ENCODE measurements at regions of chr14 and their contacts with region 1.

Region 1: DNA sequence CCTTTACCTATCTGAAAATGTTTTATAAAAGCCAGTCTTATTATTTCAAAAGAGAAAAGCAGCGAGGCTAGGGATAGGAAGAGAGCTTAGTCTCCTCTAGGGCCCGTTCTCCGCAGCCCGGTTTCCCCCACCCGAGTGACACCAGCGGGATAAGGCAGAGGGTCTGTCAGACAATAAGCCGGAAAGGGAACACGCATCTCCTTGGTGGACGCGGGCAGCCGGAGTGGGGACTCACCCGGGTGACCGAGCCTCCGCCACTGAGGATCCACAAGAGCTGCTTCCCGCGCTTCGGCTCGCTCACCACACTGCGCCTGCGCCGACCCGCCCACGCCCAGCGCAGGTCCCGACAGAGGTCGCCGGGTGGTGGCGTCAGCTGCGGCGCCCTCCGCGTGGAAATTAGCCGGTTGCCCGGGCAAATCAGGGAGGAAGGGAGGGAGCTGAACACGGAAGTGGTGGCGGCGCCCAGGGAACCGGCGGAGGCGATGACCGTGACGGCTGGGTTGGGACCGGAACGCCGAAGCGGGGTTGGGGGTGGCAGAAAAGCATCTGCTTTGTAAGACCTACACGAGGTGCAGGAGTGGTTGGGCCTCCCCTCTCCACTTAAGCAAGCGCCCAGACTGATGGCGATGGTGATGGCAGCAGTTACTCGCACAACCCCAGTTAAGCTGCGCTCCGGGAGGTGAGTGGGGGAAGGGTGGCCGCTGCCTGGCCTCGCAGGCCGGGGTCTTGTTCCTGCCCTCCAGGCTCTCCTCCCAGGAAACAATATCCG is at the starts of genes SOCS4 and WDHD1:
- DNase-seq: peak; percentile 97
- ATAC-seq: peak; percentile 93
- H3K4me3 ChIP-seq: peak within 1 kb of the TSS; percentile 62 to 95 (median 90)
- H3K4me3 Mint-ChIP-seq: peak within 1 kb of the TSS; percentile 94
- H3K27ac ChIP-seq: peak within 1 kb of the TSS; percentile 78 to 90
- H3K27ac Mint-ChIP-seq: peak within 1 kb of the TSS; percentile 91
- H3K4me1 ChIP-seq: peaks cover 18 to 30% of the 10 kb centered on the region in 2 donors
- H3K4me1 Mint-ChIP-seq: peaks cover 47% of the 10 kb centered on the region
- H3K27me3 ChIP-seq: no peaks in the 10 kb centered on the region
- H3K27me3 Mint-ChIP-seq: no peaks in the 10 kb centered on the region
- CTCF ChIP-seq: no peak
- total RNA-seq, gene SOCS4: 23.6 and 26.3 TPM in 2 replicates
- total RNA-seq, gene WDHD1: 6.2 and 6.5 TPM in 2 replicates

Region 2: GRCh38 chr14:55071870-55072640 is 45.1 kb after region 1 on chr14:
- CTCF ChIA-PET with region 1: interaction called, 5 read pairs
- POLR2A ChIA-PET with region 1: no interaction called
- intact Hi-C with region 1: loop called (anchors 1 kb)
- DNase-seq: peak; percentile 86
- ATAC-seq: peak; percentile 75
- H3K4me3 ChIP-seq: peak overlapping the region in 4 of 5 experiments; percentile 4 to 48 (median 31)
- H3K4me3 Mint-ChIP-seq: peak overlapping the region; percentile 81
- H3K27ac ChIP-seq: peak overlapping the region; percentile 84 to 93
- H3K27ac Mint-ChIP-seq: peak overlapping the region; percentile 96
- H3K4me1 ChIP-seq: peaks cover 34 to 52% of the 10 kb centered on the region in 2 donors
- H3K4me1 Mint-ChIP-seq: peaks cover 66% of the 10 kb centered on the region
- H3K27me3 ChIP-seq: no peaks in the 10 kb centered on the region
- H3K27me3 Mint-ChIP-seq: no peaks in the 10 kb centered on the region
- CTCF ChIP-seq: no peak

Region 3: GRCh38 chr14:55191203-55192053 is 164.5 kb after region 1 on chr14 and contains the start of gene DLGAP5:
- CTCF ChIA-PET with region 1: no interaction called
- POLR2A ChIA-PET with region 1: no interaction called
- intact Hi-C with region 1: loop called (anchors 1 kb)
- DNase-seq: peak; percentile 91
- ATAC-seq: peak; percentile 98
- H3K4me3 ChIP-seq: peak within 1 kb of the TSS; percentile 38 to 72 (median 68)
- H3K4me3 Mint-ChIP-seq: peak within 1 kb of the TSS; percentile 89
- H3K27ac ChIP-seq: peak within 1 kb of the TSS in 1 of 2 donors; percentile 68
- H3K27ac Mint-ChIP-seq: peak within 1 kb of the TSS; percentile 42
- H3K4me1 ChIP-seq: peaks cover 9 to 13% of the 10 kb centered on the region in 2 donors
- H3K4me1 Mint-ChIP-seq: peaks cover 14% of the 10 kb centered on the region
- H3K27me3 ChIP-seq: no peaks in the 10 kb centered on the region
- H3K27me3 Mint-ChIP-seq: no peaks in the 10 kb centered on the region
- CTCF ChIP-seq: no peak
- total RNA-seq, gene DLGAP5: not detected in 2 replicates

Measured in B cell (primary cell).